Caco-2 (cell line): ENCODE measurements at regions of chr2 and their contacts with region 1.

Region 1: DNA sequence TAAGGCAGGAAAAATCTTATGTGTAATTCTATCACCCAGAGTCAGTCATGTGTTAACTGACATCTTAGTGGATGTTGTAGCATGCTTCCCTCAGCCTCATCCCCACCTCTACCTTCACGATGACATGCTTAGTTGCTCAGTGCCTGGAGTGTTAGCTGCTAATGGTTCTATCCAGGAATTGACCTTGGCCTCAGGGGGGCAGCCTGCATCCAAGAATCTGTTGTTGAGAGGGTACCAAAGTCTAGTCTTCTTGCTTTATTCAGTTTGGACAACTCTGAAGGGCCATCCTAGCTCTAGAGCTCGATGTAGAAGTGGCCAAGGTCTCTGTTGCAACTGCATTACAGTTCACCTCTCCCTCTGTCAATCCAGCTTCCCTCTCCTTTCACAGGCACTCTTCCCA is 61.2 kb downstream of the ACYP2 start:
- DNase-seq: peak; percentile 52 to 72
- H3K4me3 ChIP-seq: no peak overlapping the region
- H3K4me3 Mint-ChIP-seq: no peak overlapping the region
- H3K27ac Mint-ChIP-seq: no peak overlapping the region
- H3K4me1 ChIP-seq: no peaks in the 10 kb centered on the region
- H3K4me1 Mint-ChIP-seq: no peaks in the 10 kb centered on the region
- H3K27me3 ChIP-seq: no peaks in the 10 kb centered on the region
- H3K27me3 Mint-ChIP-seq: no peaks in the 10 kb centered on the region
- CTCF ChIP-seq: peak; percentile 55 to 61

Region 2: DNA sequence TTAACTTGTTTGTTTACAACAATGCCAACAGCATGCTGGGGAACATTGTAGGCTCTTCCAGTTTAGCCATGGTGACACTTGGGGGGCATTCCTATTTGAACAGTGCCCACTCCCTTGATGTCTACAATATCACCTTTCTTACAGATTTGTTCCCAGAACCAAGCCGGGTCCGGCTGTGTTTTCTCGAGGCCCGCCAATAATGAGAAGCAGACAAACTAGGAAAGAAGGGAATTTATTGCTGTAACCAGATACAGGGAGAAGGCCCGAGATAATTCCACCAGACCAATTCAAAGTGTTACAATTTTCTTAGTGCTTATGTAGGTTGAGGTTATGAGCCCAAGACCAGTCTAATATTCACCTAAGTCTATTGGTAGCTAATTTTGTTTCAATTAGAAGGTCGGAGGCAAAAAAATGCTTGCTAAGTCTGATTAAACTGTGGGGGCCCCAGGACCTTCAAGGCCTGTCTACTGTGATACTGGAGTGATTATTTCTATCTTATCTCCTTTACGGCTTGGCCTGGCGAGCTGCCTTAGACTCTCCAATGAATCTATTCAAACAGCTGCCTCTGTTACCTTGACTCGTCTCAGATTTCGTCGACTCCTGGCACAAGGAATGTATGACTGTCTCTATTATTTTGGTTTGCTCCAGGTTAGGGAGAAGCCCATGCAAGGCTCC is 146.7 kb before region 1 on chr2:
- CTCF ChIA-PET with region 1: no interaction called
- POLR2A ChIA-PET with region 1: no interaction called
- intact Hi-C with region 1: no loop called
- DNase-seq: no peak
- H3K4me3 ChIP-seq: no peak overlapping the region
- H3K4me3 Mint-ChIP-seq: no peak overlapping the region
- H3K27ac Mint-ChIP-seq: no peak overlapping the region
- H3K4me1 ChIP-seq: peaks cover 14% of the 10 kb centered on the region
- H3K4me1 Mint-ChIP-seq: peaks cover 15% of the 10 kb centered on the region
- H3K27me3 ChIP-seq: no peaks in the 10 kb centered on the region
- H3K27me3 Mint-ChIP-seq: no peaks in the 10 kb centered on the region
- CTCF ChIP-seq: no peak

Region 3: DNA sequence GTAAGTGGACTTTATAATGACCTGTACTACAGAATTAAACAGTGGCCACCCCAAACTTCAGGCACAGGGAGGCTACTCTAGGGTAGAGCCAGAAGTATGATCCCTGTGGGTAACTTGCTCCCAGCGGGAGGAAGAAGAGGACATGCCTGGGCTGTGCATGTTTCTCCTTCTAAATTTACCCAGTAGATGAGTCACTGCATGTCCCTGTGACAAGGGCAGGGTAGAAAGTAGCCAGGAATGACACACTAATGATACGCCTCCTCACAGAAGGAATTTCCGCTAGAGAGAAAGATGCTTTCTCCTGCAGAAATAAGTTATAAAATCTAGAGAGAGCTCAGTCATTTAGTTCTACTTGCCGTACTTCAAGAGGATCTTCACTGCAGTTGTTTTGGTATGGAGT is 53.6 kb before region 1 on chr2:
- CTCF ChIA-PET with region 1: no interaction called
- POLR2A ChIA-PET with region 1: no interaction called
- intact Hi-C with region 1: no loop called
- DNase-seq: no peak
- H3K4me3 ChIP-seq: no peak overlapping the region
- H3K4me3 Mint-ChIP-seq: no peak overlapping the region
- H3K27ac Mint-ChIP-seq: no peak overlapping the region
- H3K4me1 ChIP-seq: 0 out of 2 replicates have a peak, but pooled peaks cover 7% of the 10 kb centered on the region
- H3K4me1 Mint-ChIP-seq: no peaks in the 10 kb centered on the region
- H3K27me3 ChIP-seq: no peaks in the 10 kb centered on the region
- H3K27me3 Mint-ChIP-seq: no peaks in the 10 kb centered on the region
- CTCF ChIP-seq: no peak

Region 4: GRCh38 chr2:54350426-54350825 is 173.8 kb after region 1 on chr2:
- CTCF ChIA-PET with region 1: no interaction called
- POLR2A ChIA-PET with region 1: no interaction called
- intact Hi-C with region 1: loop called (anchors 5 kb)
- DNase-seq: no peak
- H3K4me3 ChIP-seq: no peak overlapping the region
- H3K4me3 Mint-ChIP-seq: no peak overlapping the region
- H3K27ac Mint-ChIP-seq: no peak overlapping the region
- H3K4me1 ChIP-seq: 0 out of 2 replicates have a peak, but pooled peaks cover 4% of the 10 kb centered on the region
- H3K4me1 Mint-ChIP-seq: no peaks in the 10 kb centered on the region
- H3K27me3 ChIP-seq: no peaks in the 10 kb centered on the region
- H3K27me3 Mint-ChIP-seq: peaks cover 6% of the 10 kb centered on the region
- CTCF ChIP-seq: no peak

Region 5: DNA sequence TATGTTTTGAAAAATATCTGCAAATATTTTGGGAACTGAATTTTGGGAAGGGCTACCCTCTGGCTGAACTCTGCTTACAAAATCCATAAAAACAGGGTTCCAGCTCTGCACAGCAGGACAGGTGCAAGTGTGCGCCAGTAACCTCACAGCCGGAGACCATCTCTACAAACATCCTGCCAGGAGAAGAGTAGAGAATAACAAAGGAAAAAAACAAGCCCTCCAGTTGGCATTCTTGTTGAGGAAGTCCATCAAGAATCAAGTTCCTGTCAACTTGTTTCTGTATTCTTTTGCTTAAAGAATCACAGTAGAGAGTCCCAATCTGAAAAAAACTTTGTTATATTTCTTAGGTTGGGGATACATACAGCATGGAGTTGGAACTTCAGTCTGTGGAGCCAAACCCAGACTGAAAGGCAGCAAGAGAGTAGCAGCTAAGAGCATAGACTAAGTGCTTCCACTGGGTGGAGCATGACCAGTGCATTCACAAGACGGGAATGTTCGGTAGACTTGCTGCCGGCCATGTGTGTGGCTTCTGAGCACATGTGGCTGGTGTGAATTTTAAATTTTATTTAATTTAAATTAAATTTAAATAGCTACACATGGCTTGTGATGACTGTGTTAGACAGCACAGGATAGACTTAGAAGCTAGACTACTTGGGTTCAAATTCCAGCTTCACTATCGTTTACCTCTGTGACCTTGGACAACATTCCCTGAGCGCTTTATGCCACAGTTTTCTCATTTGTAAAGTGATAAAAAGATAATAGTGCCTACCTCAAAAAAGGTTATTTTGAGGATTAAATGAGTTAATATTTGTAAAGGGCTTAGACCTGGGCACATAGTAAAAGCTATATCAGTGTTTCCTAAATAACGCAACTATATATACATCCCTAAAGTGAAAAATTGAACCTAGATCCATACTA is 321.4 kb after region 1 on chr2:
- CTCF ChIA-PET with region 1: no interaction called
- POLR2A ChIA-PET with region 1: no interaction called
- intact Hi-C with region 1: loop called (anchors 1 kb)
- DNase-seq: peak; percentile 38 to 50
- H3K4me3 ChIP-seq: no peak overlapping the region
- H3K4me3 Mint-ChIP-seq: no peak overlapping the region
- H3K27ac Mint-ChIP-seq: no peak overlapping the region
- H3K4me1 ChIP-seq: no peaks in the 10 kb centered on the region
- H3K4me1 Mint-ChIP-seq: peaks cover 12% of the 10 kb centered on the region
- H3K27me3 ChIP-seq: no peaks in the 10 kb centered on the region
- H3K27me3 Mint-ChIP-seq: no peaks in the 10 kb centered on the region
- CTCF ChIP-seq: peak; percentile 40 to 44

Region 6: DNA sequence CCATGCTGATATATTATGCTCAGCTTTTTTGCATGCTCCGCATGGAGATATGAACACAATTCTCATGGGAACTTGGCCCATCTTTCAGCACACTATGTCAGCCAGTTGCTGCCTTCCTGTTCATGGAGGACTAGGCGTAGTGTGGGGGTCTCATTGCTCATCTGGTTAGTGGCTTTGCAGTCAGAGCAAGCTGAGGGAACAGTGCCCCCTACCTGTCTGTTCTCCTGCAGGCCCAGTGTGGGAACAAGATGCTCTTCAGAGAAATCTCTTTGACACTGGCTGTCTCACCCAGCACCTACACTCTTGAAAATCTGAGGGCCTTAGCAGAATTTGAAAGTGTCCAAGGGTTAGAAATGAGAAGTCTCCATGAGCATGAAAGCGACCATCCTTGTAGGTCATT is 326.6 kb after region 1 on chr2:
- CTCF ChIA-PET with region 1: no interaction called
- POLR2A ChIA-PET with region 1: no interaction called
- intact Hi-C with region 1: loop called (anchors 1 kb)
- DNase-seq: peak in 1 of 2 experiments; percentile 40
- H3K4me3 ChIP-seq: no peak overlapping the region
- H3K4me3 Mint-ChIP-seq: no peak overlapping the region
- H3K27ac Mint-ChIP-seq: no peak overlapping the region
- H3K4me1 ChIP-seq: no peaks in the 10 kb centered on the region
- H3K4me1 Mint-ChIP-seq: peaks cover 12% of the 10 kb centered on the region
- H3K27me3 ChIP-seq: no peaks in the 10 kb centered on the region
- H3K27me3 Mint-ChIP-seq: no peaks in the 10 kb centered on the region
- CTCF ChIP-seq: peak; percentile 45 to 46